ENCODE measurements at regions of chr2 and their contacts with region 1.

Region 1: DNA sequence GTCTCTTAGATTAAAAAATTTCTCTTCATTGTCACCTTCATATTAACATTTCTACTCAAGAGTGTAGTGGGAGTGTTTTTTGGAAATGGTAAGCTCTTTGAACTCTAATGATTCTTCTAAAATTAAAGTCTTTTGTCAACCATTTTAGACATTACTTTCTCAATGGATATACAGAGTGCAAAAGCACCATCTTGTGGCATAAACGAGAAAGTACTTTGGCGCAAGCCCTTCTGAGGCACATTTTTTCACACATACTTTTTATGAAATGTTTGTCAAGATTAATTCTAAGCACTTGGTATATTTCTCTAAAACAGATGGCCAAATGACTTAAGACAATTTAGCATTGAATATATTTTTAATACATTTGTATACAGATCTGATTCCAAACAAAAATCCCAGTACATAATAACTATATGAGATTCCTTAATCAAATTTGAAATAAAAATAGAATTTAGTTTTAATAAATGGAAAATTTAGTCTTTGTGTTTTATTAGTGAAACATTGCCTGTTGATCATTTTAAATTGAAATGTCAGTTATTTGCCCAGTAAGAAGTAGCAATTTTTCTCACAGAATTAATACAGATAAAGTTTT is 63.3 kb upstream of the GALNT5 start:
- DNase-seq: peak in 1 of 2 donors; percentile 28
- ATAC-seq: peak in 3 of 8 donors; percentile 28 to 49 (median 33)
- H3K4me3 ChIP-seq: no peak overlapping the region
- H3K27ac ChIP-seq: no peak overlapping the region
- H3K4me1 ChIP-seq: peaks cover 0 to 8% (median 0%) of the 10 kb centered on the region in 9 donors
- H3K27me3 ChIP-seq: peaks cover 0 to 3% (median 0%) of the 10 kb centered on the region in 7 donors
- CTCF ChIP-seq: peak in 8 of 9 donors; percentile 30 to 83 (median 74)

Region 2: GRCh38 chr2:155368934-155369333 is 1825.3 kb before region 1 on chr2:
- intact Hi-C with region 1: loop called in 5 of 10 experiments (anchors 5 to 10 kb)
- DNase-seq: no peak
- ATAC-seq: no peak
- H3K4me3 ChIP-seq: no peak overlapping the region
- H3K27ac ChIP-seq: no peak overlapping the region
- H3K4me1 ChIP-seq: no peaks in the 10 kb centered on the region
- H3K27me3 ChIP-seq: no peaks in the 10 kb centered on the region
- CTCF ChIP-seq: peak in 5 of 9 donors; percentile 8 to 39 (median 20)

Region 3: GRCh38 chr2:155377266-155377680 is 1816.9 kb before region 1 on chr2:
- intact Hi-C with region 1: loop called in 9 of 10 experiments (anchors 5 to 10 kb)
- DNase-seq: no peak
- ATAC-seq: no peak
- H3K4me3 ChIP-seq: no peak overlapping the region
- H3K27ac ChIP-seq: no peak overlapping the region
- H3K4me1 ChIP-seq: no peaks in the 10 kb centered on the region
- H3K27me3 ChIP-seq: peaks cover 0 to 5% (median 0%) of the 10 kb centered on the region in 7 donors
- CTCF ChIP-seq: peak in 7 of 9 donors; percentile 25 to 53 (median 41)

Region 4: DNA sequence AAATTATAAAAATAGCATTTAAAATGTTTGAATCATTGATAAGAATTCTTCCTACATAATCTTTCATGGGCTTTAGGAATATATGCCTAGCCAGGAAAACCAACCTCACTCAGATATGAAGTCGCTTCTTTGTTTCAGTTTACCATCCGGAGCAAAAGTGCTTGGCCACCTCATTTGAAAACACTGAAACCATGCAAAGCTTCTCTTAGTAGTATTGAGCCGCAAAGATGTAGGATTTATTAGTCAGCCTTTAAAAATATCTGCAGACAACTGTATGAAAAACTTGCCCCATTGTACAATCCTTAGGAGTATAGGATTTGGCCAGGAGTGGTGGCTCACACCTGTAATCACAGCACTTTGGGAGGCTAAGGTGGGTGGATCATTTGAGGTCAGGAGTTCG is 782.4 kb before region 1 on chr2:
- intact Hi-C with region 1: loop called in 1 of 10 experiments (anchors 10 kb)
- DNase-seq: no peak
- ATAC-seq: no peak
- H3K4me3 ChIP-seq: no peak overlapping the region
- H3K27ac ChIP-seq: no peak overlapping the region
- H3K4me1 ChIP-seq: no peaks in the 10 kb centered on the region
- H3K27me3 ChIP-seq: peaks cover 0 to 6% (median 0%) of the 10 kb centered on the region in 7 donors
- CTCF ChIP-seq: no peak

Region 5: GRCh38 chr2:156883812-156884211 is 310.4 kb before region 1 on chr2:
- intact Hi-C with region 1: loop called in 1 of 10 experiments (anchors 10 kb)
- DNase-seq: no peak
- ATAC-seq: no peak
- H3K4me3 ChIP-seq: no peak overlapping the region
- H3K27ac ChIP-seq: no peak overlapping the region
- H3K4me1 ChIP-seq: no peaks in the 10 kb centered on the region
- H3K27me3 ChIP-seq: no peaks in the 10 kb centered on the region
- CTCF ChIP-seq: no peak